Activated B cell treated with CpG ODN at 0.5 μM for 24 hours (primary cell): ENCODE measurements at regions of chr11 and their contacts with region 1.

Region 1: DNA sequence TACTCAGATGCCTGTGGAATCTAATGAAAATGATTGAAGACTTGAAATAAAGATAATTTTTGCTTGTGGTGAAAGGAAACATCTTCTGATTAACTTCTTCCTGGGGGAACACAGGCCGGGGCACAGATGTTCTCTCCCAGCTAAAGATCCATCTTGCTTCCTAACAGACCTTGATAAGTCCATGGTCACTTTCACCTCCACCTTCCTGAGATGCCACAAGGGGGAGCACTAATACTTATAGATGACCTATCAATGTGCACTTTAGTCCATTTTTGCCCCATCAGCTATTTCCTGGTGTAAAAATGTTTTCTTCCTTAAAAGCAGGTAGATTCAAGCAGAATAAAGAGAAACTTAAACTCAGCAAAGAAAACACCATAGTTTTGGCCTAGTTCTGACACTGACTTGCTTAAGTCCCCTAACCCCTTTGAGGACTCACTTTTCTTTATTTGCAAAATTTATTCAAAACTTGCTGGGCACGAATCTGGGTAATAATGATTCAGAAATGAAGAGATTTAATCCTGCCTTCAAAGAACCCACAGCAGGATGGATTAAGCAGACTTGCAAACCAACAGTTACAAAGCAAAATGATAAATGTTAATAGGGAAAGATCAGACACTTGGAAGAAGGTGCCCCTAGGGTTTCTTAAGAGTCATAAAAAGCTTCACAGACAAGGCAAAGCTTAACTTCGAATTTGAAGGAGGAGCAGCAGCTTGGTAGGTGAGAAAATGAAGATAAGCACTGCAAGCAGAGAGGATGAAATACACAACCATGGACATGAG is 158.7 kb downstream of the RAB38 start:
- DNase-seq: no peak
- ATAC-seq: peak; percentile 37
- H3K4me3 Mint-ChIP-seq: no peak overlapping the region
- H3K27ac Mint-ChIP-seq: no peak overlapping the region
- H3K4me1 Mint-ChIP-seq: no peaks in the 10 kb centered on the region
- H3K27me3 Mint-ChIP-seq: no peaks in the 10 kb centered on the region
- CTCF ChIP-seq: peak; percentile 29

Region 2: GRCh38 chr11:88535916-88536547 is 519.5 kb after region 1 on chr11:
- CTCF ChIA-PET with region 1: interaction called, 47 read pairs
- POLR2A ChIA-PET with region 1: no interaction called
- intact Hi-C with region 1: no loop called
- DNase-seq: no peak
- ATAC-seq: no peak
- H3K4me3 Mint-ChIP-seq: no peak overlapping the region
- H3K27ac Mint-ChIP-seq: no peak overlapping the region
- H3K4me1 Mint-ChIP-seq: no peaks in the 10 kb centered on the region
- H3K27me3 Mint-ChIP-seq: no peaks in the 10 kb centered on the region
- CTCF ChIP-seq: no peak

Region 3: DNA sequence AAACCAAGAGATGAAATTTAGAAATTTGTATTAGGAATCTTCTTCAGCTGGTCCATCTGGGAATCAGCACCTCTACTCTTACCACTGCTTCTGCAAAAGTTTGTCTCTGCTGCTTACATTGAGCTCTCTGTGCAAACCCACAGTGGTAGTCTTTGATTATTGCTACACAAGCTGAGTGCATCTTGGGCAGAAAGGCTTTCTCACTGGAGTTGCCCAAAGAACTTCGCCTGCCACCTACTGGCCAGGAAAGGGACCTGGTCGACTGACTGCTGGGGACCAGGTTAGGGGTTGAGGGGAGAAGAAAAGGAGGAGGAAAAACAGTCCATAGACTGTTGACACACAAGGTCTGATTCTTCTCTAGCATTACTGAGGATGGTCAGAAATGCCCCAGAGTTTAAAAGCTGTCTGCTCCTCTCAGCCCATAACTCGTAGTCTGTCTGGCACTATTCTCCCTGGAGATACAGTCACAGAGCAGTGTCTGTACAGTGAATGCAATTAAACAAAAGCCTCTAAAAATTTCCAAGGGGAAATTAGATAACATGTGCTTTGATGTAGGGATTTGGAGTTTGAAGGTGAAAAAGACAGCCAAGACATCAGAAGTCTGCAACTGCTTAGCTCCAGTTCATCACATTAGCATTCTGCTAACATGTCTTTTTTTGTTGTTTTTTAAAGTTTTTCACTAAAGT is 535.9 kb after region 1 on chr11:
- CTCF ChIA-PET with region 1: interaction called, 42 read pairs
- POLR2A ChIA-PET with region 1: no interaction called
- intact Hi-C with region 1: loop called (anchors 1 kb)
- DNase-seq: peak; percentile 21
- ATAC-seq: peak; percentile 40
- H3K4me3 Mint-ChIP-seq: no peak overlapping the region
- H3K27ac Mint-ChIP-seq: no peak overlapping the region
- H3K4me1 Mint-ChIP-seq: no peaks in the 10 kb centered on the region
- H3K27me3 Mint-ChIP-seq: peaks cover 4% of the 10 kb centered on the region
- CTCF ChIP-seq: no peak